Right ventricle myocardium inferior (tissue), 1 donor: ENCODE measurements at regions of chr17 and their contacts with region 1.

Region 1: GRCh38 chr17:68457539-68458259 is 403 bp upstream of the WIPI1 start:
- DNase-seq: peak; percentile 99
- ATAC-seq: peak; percentile 89

Region 2: DNA sequence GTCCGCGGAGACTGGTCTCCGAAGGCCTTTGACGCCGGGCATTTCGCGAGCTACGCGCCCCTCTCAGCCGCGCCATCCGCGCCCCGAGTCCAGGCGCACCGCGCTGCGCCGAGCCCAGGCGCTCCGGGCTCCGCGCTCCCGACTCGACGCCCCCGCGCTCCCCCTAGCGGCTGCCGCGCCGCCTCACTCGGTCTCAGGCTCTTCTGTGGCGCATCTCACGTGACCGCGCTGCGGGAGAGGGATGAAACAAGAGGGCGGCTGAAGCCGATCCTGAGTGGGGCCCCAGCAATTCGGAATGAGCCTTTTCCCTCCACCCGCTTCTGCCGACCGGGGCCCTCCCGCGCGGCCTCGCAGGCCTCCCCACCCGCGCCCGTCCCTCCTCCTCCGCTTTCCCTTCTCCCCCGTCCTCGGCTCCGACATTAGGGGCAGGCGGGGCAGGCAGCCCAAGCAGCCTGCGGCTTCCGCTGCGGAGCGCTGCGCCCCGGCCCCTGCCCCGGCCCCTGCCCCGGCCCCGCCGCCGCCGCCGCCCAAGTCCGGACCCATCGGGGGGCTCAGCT is 252.4 kb before region 1 on chr17:
- intact Hi-C with region 1: loop called (anchors 5 kb)
- DNase-seq: peak; percentile 98
- ATAC-seq: peak; percentile 93

Region 3: DNA sequence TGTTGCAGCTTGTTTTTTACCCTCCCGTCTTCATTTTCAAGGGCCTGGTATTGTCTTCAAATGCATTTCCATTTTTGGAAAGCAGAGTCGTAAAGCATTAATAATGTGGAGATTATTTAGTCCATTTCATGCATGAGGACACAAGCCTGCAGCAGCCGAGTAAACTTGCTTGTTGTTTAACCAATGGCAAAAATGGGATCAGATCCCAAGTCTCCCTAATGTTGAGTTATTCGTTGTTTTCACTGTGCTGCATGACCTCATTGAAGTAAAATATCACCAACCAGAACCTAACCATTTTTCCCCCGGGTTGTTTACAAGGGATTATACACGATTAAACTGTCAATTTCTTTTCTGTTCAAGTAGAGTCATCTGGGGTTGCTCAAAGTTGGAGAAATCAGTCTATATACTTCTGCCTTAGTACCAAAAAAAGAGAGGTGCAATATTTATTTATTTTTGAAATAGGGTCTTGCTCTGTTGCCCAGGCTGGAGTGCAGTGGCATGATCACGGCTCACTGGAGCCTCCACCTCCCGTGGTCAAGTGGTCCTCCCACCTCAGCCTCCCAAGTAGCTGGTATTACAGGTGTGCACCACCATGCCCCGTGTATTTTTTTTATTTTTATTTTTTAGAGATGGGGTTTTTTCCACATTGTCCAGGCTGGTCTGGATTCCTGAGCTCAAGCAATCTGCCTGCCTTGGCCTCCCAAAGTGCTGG is 197.5 kb before region 1 on chr17:
- intact Hi-C with region 1: loop called (anchors 2 kb)
- DNase-seq: no peak
- ATAC-seq: no peak

Region 4: GRCh38 chr17:68398691-68399637 is 58.7 kb before region 1 on chr17:
- intact Hi-C with region 1: loop called (anchors 5 kb)
- DNase-seq: peak; percentile 79
- ATAC-seq: peak; percentile 84

Region 5: GRCh38 chr17:68431661-68432071 is 26.0 kb before region 1 on chr17:
- intact Hi-C with region 1: loop called (anchors 2 kb)
- DNase-seq: no peak
- ATAC-seq: no peak

Region 6: DNA sequence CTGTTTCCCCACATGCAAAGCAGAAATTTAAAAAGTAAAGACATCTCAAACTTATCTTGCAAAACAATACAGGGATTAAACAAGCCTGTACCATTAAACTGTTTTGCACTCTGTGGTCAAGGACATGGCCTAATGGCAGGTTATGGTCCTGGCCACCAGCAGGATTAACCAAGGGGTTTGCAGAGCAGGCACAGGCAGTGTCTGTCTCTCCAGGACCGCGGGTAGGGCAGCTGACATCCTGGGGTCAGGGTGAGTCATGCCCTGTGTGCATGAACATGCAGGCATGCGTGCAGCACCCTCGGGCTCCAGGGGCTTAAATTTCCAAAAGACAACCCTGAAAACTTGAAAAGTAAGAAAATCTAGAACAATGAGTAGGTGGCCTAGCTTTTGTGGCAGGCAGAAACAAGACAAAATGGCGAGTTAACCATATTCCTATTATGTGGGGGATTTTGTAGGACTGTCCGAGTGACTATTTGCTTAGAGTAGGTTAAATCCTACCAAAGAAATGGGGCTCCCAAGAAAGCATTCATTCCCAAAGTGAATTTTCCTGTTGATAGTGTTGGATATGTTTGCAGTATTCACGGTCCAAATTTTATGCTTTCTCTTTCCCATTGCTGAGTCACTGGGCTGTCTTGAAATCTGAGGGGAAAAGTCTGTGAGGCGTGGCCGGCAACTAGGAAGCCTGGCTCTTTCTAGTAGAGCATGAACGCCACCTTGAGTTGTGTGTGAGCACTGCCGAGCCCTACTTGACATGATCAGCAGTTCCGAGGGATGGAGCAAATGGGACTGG is 301.8 kb after region 1 on chr17:
- intact Hi-C with region 1: loop called (anchors 5 kb)
- DNase-seq: peak; percentile 92
- ATAC-seq: peak; percentile 99